Cardiac septum (tissue), 1 donor: ENCODE measurements at regions of chr2 and their contacts with region 1.

Region 1: DNA sequence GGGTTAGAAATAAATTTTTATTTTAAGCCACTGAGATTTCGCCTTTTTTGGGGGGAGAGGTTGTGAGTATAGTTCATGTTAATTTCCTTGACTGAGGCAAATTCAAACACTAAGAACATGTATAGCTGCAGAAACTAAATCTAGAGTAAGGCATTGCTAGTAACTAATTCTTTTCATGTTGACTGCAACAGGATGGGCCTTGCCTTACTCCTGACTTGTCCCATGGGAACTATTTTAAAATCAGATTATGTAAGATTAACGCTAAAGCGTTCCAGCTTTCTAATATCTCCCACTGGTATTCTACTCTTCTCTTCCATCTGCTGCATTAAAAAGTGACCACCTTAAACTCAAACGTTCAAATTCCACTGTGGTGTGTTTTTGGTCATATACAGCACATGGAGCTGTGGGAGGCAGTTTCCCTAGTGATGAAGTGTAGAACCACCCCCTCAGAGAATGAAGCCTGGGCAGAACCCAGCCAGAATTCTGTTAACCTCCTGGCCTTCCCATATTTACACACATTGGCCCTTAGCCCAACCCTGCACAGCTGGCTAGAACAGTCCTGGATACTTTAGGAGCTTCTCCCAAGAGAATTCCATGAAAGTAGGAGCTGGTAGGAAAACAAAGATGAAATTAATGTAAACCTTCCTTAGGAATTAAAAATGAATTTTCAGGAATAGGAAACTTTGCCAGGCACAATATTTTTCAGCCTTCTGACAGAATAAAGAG is 687.8 kb downstream of the SLC4A3 start:
- DNase-seq: no peak

Region 2: DNA sequence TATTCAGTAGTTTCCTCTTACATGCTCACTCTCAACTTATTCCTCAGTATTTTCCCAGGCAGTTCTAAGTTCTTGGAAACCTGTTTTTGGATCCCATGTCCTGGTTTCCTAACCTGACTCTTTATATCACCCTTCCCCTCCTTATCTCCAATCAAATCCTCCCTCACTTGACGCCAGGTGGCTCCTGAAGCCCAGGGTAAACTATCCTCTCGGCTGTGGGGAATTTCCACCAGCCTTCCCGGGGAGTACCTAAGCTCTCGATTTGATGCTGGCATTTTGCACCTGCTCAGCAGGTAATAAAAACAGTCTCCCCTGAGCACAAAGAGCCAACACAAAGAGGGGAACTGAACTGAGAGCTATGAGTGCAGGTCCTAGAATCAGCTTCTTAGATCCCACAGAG is 149.9 kb before region 1 on chr2:
- intact Hi-C with region 1: no loop called
- DNase-seq: no peak

Region 3: DNA sequence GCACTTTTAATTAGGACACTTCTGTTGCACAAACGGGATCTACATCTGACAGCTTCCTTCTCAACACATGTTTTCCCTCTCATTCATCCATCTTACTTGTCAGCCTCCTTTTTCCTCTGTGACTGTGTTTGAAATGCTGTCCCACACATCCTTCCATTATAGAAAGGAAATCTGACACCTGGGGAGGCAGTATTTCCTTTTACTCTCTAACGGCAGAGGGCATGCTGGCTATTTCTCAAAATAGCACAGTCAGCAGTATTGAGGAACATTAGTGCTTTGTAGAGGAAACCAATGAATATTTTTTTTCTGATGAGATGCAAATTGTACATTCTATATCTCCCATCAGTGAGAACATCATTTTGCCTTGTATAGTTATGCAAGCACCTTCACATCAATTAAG is 19.1 kb before region 1 on chr2:
- intact Hi-C with region 1: no loop called
- DNase-seq: no peak

Region 4: DNA sequence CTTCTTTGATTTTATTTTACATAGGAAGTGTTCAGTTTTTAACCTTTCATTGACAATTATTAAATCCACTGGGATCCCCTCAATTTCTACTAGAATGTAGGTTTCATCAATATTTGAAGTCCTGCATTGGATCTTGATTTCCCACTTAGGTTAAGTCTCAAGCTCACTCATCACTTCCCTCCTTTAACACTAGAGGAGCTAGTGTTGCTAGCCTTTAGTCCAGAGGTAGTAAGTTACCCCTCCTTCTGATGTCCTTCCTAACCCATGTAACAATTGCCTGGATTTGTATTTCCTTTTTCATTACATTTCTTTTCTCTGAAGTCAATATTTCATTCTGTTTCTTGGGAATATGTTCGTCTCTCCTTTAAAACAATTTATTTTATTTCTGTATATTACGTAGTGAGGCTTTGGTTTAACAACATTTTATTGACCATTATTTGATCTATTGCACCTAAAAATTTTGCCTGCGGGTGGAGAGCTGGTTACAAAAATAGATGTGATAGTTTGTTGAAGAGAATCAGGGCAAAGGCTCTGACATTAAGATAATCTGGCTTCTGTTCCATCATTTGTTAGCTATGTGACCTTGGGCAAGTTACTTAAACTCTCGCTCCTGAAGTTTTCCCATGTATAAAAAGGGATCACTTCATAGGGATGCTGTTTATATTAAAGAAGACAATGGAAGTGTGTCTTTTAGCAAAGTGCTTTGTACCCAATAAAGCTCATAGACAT is 145.2 kb after region 1 on chr2:
- intact Hi-C with region 1: loop called (anchors 10 kb)
- DNase-seq: no peak